Endothelial cell of umbilical vein (primary cell): ENCODE measurements at regions of chr21 and their contacts with region 1.

Region 1: DNA sequence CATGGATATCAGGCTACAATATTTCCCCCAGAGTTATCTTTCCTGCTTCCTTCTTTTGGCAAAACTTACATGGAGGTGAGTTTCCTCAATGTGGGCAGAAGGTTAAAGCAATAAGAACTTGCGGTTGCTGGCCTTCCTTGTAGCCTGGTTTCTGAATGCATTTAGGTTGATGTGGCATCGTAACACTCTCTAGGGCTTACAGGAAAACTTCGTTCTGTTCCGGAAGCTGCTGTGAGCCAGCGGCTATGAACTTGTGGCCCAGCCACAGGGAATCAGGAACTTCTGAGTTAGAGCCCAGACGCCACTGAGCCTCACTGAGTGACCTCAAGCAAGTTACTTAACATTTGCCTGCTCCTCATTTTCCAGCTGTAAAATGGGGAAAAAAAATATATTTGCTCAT is 623.4 kb upstream of the ADAMTS5 start:
- DNase-seq: peak; percentile 74
- H3K4me3 ChIP-seq: no peak overlapping the region
- H3K27ac ChIP-seq: no peak overlapping the region
- H3K4me1 ChIP-seq: no peaks in the 10 kb centered on the region
- H3K27me3 ChIP-seq: peaks cover 3 to 12% of the 10 kb centered on the region in 2 experiments
- CTCF ChIP-seq: no peak
- POLR2A ChIP-seq: no peak

Region 2: GRCh38 chr21:27572686-27573085 is 17.6 kb before region 1 on chr21:
- CTCF ChIA-PET with region 1: no interaction called
- POLR2A ChIA-PET with region 1: no interaction called
- dilution Hi-C with region 1: no loop called
- intact Hi-C with region 1: no loop called
- DNase-seq: no peak
- H3K4me3 ChIP-seq: no peak overlapping the region
- H3K27ac ChIP-seq: no peak overlapping the region
- H3K4me1 ChIP-seq: no peaks in the 10 kb centered on the region
- H3K27me3 ChIP-seq: no peaks in the 10 kb centered on the region
- CTCF ChIP-seq: no peak
- POLR2A ChIP-seq: no peak

Region 3: GRCh38 chr21:27681841-27682240 is 91.6 kb after region 1 on chr21:
- CTCF ChIA-PET with region 1: no interaction called
- POLR2A ChIA-PET with region 1: no interaction called
- dilution Hi-C with region 1: no loop called
- intact Hi-C with region 1: loop called (anchors 10 kb)
- DNase-seq: peak; percentile 69
- H3K4me3 ChIP-seq: no peak overlapping the region
- H3K27ac ChIP-seq: peak overlapping the region; percentile 27
- H3K4me1 ChIP-seq: peaks cover 8% of the 10 kb centered on the region
- H3K27me3 ChIP-seq: no peaks in the 10 kb centered on the region
- CTCF ChIP-seq: no peak
- POLR2A ChIP-seq: no peak